MCF 10A (cell line): ENCODE measurements at regions of chrX and their contacts with region 1.

Region 1: DNA sequence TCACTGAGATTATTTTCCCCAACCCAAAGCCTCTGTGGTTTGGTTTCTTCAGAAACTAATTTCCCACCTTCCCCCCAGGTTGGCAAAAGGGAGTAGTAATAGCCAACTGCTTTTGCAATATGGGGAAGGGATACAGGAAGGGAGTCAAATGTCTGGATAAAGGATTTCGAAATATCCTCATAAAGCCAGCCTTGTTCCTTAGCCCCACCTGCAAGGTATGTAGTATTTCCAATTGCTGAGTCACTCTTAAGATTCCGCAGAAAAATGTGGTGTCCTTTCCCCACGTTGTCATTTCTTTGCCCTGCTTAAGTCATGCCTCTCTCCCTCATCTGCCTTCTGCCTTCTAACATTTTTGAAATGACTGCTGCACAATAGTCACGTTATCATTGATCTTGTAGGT is 138.8 kb upstream of the DCAF8L1 start:
- DNase-seq: peak; percentile 89
- H3K4me3 Mint-ChIP-seq: peak overlapping the region; percentile 21
- H3K27ac Mint-ChIP-seq: no peak overlapping the region
- H3K4me1 Mint-ChIP-seq: peaks cover 8% of the 10 kb centered on the region
- H3K27me3 Mint-ChIP-seq: no peaks in the 10 kb centered on the region
- CTCF ChIP-seq: no peak

Region 2: DNA sequence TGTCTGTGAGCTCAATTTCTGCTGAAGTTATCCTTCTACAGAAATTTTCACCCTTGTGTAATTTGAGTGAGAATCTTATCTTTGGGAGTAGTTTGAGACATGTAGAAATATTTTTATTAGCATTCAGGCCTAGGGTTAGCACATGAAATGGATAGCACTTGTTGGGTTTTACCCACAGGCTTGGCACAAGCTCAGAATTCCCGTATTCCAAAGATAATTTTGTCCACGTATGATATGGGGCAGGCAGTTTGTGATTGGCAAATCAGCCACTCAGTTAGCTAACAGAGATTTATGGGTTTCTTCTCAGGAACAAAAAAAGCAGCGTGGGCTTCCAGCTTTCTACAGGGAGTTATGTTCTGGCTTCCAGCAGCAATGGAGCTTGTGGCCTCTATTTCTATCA is 20.9 kb before region 1 on chrX:
- CTCF ChIA-PET with region 1: no interaction called
- POLR2A ChIA-PET with region 1: interaction called, 3 read pairs
- intact Hi-C with region 1: loop called (anchors 2 kb)
- DNase-seq: peak; percentile 16
- H3K4me3 Mint-ChIP-seq: no peak overlapping the region
- H3K27ac Mint-ChIP-seq: no peak overlapping the region
- H3K4me1 Mint-ChIP-seq: no peaks in the 10 kb centered on the region
- H3K27me3 Mint-ChIP-seq: no peaks in the 10 kb centered on the region
- CTCF ChIP-seq: no peak

Region 3: DNA sequence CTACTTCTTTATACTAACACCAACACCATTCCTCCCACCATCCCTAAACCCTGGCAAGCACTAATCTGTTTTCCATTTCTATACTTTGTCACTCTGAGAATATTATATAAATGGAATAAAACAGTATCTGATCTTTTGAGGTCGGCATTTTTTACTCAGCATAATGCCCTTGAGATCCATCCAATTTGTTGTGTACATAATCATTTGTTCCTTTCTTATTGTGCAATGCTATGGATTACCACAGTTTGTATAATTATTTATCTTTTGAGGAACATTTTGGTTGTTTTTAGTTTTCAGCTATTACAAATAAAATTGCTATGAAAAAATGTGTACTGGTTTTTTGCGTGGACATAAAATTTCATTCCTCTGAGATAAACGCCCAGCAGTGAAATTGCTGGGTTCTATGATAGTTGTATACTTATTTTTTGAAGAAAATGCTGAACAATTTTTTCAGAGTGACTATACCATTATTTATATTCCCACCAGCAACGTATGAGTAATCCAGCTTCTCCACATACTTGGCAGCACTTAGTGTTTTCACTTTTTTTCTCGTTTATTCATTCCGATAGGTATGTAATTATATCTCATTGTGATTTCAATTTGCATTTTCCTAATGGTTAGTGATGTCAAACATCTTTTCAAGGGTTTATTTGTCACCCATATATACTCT is 15.4 kb after region 1 on chrX:
- CTCF ChIA-PET with region 1: no interaction called
- POLR2A ChIA-PET with region 1: no interaction called
- intact Hi-C with region 1: no loop called
- DNase-seq: peak; percentile 56
- H3K4me3 Mint-ChIP-seq: no peak overlapping the region
- H3K27ac Mint-ChIP-seq: peak overlapping the region; percentile 63
- H3K4me1 Mint-ChIP-seq: no peaks in the 10 kb centered on the region
- H3K27me3 Mint-ChIP-seq: no peaks in the 10 kb centered on the region
- CTCF ChIP-seq: no peak